K562 (cell line): ENCODE measurements at regions of chr3 and their contacts with region 1.

Region 1: GRCh38 chr3:108505811-108506210 is 4.6 kb downstream of the MYH15 start:
- DNase-seq: peak in 2 of 4 experiments; percentile 10 to 11
- ATAC-seq: peak; percentile 67; the same call in 2 of the 3 replicates
- H3K4me3 ChIP-seq: no peak overlapping the region
- H3K27ac ChIP-seq: no peak overlapping the region
- H3K4me1 ChIP-seq: no peaks in the 10 kb centered on the region
- H3K27me3 ChIP-seq: no peaks in the 10 kb centered on the region
- CTCF ChIP-seq: peak in 2 of 3 experiments; percentile 23 to 34; a peak in 3 of 6 replicates
- EP300 ChIP-seq: no peak
- POLR2A ChIP-seq: no peak
- RAD21 ChIP-seq: peak; percentile 52 to 66

Region 2: DNA sequence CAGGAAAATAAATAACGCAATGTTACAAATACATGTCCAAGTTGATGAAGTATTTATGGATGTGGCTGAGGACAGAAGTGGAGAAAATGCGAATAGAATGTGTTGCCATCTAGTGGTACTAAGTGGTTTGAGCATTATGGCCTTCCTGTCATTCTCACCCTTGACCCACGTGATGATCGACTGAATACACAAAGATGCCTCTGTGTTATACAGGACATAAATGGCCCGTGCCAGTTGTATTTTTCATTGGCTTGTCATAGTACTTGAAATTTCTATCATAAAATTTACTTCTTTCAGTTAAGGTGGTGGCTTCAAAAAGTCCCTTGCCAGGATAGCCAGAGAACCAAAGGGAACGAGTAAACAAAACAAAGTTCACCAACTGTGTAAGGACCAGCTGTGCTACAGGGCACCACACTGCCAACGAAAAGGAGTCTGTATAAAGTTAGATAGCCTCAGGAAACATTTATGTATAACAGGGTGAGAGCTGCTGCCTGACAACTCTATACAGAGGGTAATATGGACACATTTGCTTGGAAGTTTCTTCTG is 99.1 kb before region 1 on chr3:
- CTCF ChIA-PET with region 1: no interaction called
- POLR2A ChIA-PET with region 1: no interaction called
- in situ Hi-C with region 1: no loop called
- intact Hi-C with region 1: no loop called
- DNase-seq: peak; percentile 36 to 60 (median 48)
- ATAC-seq: peak; percentile 96
- H3K4me3 ChIP-seq: no peak overlapping the region
- H3K27ac ChIP-seq: no peak overlapping the region
- H3K4me1 ChIP-seq: no peaks in the 10 kb centered on the region
- H3K27me3 ChIP-seq: no peaks in the 10 kb centered on the region; a peak in 1 of 5 replicates
- CTCF ChIP-seq: peak; percentile 55 to 75 (median 61)
- EP300 ChIP-seq: no peak
- POLR2A ChIP-seq: no peak
- RAD21 ChIP-seq: peak; percentile 78 to 84

Region 3: DNA sequence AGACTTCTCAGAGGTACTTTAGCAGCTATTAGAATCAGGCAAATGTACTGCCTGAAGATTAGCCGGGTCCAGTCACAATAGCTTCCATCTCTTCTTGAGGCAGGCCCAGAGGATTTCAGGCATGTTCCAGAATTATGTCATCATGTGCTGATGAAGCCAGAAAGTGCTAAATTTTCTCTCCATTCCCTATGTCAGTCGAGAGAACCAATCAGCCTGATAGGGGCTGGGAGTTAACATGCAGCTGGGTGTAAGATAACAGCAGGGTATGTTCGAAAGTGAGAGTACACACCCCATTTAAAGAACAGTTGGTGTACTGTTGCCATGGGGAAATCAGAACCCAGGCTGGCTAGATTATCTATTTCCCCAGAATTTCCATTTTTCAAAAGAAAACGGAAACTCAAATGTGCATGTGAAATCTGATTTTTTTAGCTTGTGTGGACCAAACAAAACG is 44.1 kb before region 1 on chr3:
- CTCF ChIA-PET with region 1: no interaction called
- POLR2A ChIA-PET with region 1: no interaction called
- in situ Hi-C with region 1: no loop called
- intact Hi-C with region 1: no loop called
- DNase-seq: peak in 2 of 4 experiments; percentile 3 to 4
- ATAC-seq: no peak
- H3K4me3 ChIP-seq: no peak overlapping the region
- H3K27ac ChIP-seq: no peak overlapping the region
- H3K4me1 ChIP-seq: no peaks in the 10 kb centered on the region
- H3K27me3 ChIP-seq: no peaks in the 10 kb centered on the region
- CTCF ChIP-seq: no peak
- EP300 ChIP-seq: no peak
- POLR2A ChIP-seq: no peak
- RAD21 ChIP-seq: no peak

Region 4: GRCh38 chr3:108552267-108553159 is 46.7 kb after region 1 on chr3:
- CTCF ChIA-PET with region 1: no interaction called
- POLR2A ChIA-PET with region 1: no interaction called
- in situ Hi-C with region 1: no loop called
- intact Hi-C with region 1: loop called (anchors 5 kb)
- DNase-seq: peak in 2 of 4 experiments; percentile 6 to 27
- ATAC-seq: peak; percentile 54; the same call in 2 of the 3 replicates
- H3K4me3 ChIP-seq: no peak overlapping the region
- H3K27ac ChIP-seq: no peak overlapping the region
- H3K4me1 ChIP-seq: no peaks in the 10 kb centered on the region
- H3K27me3 ChIP-seq: no peaks in the 10 kb centered on the region
- CTCF ChIP-seq: peak in 1 of 3 experiments; percentile 51; a peak in 2 of 6 replicates
- EP300 ChIP-seq: no peak
- POLR2A ChIP-seq: no peak
- RAD21 ChIP-seq: peak; percentile 46 to 60

Region 5: DNA sequence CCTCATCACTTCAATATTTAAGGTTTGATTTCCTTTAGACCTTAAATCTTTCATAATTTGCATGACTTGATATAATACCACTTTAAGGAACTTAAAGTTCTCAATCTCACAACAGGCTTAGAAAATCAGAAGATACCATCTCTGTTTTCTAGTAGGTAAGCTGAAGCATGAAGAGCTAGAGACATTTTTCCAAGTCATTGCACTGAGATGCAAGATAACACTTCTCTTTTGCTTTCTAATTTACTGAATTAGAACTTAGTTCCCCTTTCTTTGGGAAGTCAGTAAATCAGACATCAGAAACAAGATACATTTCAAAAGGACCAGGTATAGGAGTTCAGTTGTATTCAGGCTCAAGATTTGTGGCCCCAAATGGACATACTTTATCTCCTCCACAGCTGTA is 163.4 kb after region 1 on chr3:
- CTCF ChIA-PET with region 1: no interaction called
- POLR2A ChIA-PET with region 1: no interaction called
- in situ Hi-C with region 1: no loop called
- intact Hi-C with region 1: loop called (anchors 5 kb)
- DNase-seq: no peak
- ATAC-seq: no peak
- H3K4me3 ChIP-seq: no peak overlapping the region
- H3K27ac ChIP-seq: no peak overlapping the region
- H3K4me1 ChIP-seq: no peaks in the 10 kb centered on the region
- H3K27me3 ChIP-seq: no peaks in the 10 kb centered on the region
- CTCF ChIP-seq: no peak
- EP300 ChIP-seq: no peak
- POLR2A ChIP-seq: no peak
- RAD21 ChIP-seq: no peak

Region 6: GRCh38 chr3:110362751-110363150 is 1856.9 kb after region 1 on chr3:
- CTCF ChIA-PET with region 1: no interaction called
- POLR2A ChIA-PET with region 1: no interaction called
- in situ Hi-C with region 1: no loop called
- intact Hi-C with region 1: no loop called
- DNase-seq: no peak
- ATAC-seq: no peak
- H3K4me3 ChIP-seq: no peak overlapping the region
- H3K27ac ChIP-seq: no peak overlapping the region
- H3K4me1 ChIP-seq: no peaks in the 10 kb centered on the region
- H3K27me3 ChIP-seq: no peaks in the 10 kb centered on the region
- CTCF ChIP-seq: no peak
- EP300 ChIP-seq: no peak
- POLR2A ChIP-seq: no peak
- RAD21 ChIP-seq: no peak